ENCODE measurements at regions of chr5 and their contacts with region 1.

Region 1: DNA sequence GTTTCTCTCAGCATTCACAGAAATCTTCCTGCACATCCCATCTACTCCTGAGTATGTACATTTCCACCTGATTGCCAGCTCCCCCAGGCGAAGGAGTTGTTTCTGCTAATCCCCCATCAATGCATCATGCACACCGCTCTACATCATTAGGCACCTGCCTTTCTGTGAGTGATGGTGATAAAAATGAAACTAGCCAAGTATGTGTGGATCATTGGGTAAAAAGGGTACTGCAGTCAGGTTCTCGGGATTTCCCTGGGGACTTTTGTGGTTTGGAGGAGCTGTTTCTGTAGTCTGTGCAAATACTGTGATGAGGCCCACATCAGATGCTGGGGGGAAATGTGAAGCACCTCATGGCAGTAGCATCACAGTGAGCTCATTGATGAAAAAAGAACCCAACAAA is 30.4 kb downstream of the CAMK4 start:
- DNase-seq: peak; percentile 95
- H3K4me3 Mint-ChIP-seq: peak overlapping the region; percentile 46
- H3K27ac Mint-ChIP-seq: peak overlapping the region; percentile 90
- H3K4me1 Mint-ChIP-seq: peaks cover 78% of the 10 kb centered on the region
- H3K27me3 Mint-ChIP-seq: no peaks in the 10 kb centered on the region

Region 2: DNA sequence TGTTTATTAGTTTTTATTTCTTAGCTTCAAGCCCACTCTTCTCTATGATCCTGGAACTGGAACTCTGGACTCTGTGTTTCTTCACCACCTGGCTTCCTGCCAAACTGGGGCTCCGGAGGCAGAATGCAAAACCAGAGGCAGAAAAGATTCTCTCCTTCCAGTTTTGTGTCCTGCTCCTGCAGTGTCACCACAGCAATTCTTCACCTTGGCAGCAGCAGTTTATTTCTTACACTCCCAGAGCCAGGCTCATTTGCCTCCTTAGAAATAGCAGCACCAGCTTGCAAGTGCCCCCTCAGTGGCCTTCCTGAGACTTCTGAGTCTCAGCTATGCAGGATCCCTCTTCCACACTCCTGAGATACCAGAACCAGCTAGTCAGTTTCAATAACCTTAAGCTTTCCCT is 57.1 kb before region 1 on chr5:
- CTCF ChIA-PET with region 1: no interaction called
- intact Hi-C with region 1: no loop called
- DNase-seq: no peak
- H3K4me3 Mint-ChIP-seq: no peak overlapping the region
- H3K27ac Mint-ChIP-seq: no peak overlapping the region
- H3K4me1 Mint-ChIP-seq: peaks cover 12% of the 10 kb centered on the region
- H3K27me3 Mint-ChIP-seq: peaks cover 2% of the 10 kb centered on the region

Region 3: DNA sequence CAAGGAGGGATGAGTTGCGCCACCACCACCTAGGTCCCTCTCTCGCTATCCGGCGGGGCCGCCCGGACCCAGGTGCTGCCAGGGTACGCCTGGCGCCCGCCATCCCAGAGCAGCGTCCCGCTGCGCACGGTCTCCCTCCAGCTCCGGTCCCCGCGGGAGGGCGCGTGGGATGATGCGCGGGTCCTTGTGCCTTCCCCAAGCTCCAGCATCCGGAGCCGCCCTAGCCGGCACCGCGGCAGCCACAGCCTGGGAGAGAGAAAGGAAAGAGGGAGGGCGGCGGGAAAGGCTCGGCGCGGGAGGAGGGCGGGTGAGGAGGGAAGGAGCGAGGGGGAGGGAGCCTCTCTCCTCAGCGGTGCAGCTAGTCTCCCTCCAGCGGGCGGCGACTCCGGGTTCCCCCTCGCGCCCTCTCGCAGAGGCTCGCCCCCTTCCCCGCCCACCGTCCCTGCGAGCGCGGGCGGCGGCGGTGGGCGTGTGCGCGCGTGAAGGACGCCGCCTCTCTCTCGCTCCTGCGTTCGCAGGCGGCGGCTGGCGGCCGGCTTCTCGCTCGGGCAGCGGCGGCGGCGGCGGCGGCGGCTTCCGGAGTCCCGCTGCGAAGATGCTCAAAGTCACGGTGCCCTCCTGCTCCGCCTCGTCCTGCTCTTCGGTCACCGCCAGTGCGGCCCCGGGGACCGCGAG is 30.6 kb before region 1 on chr5 and contains the start of gene CAMK4:
- CTCF ChIA-PET with region 1: interaction called, 21 read pairs
- intact Hi-C with region 1: loop called (anchors 1 kb)
- DNase-seq: peak; percentile 75
- H3K4me3 Mint-ChIP-seq: peak within 1 kb of the TSS; percentile 95
- H3K27ac Mint-ChIP-seq: peak within 1 kb of the TSS; percentile 97
- H3K4me1 Mint-ChIP-seq: peaks cover 25% of the 10 kb centered on the region
- H3K27me3 Mint-ChIP-seq: no peaks in the 10 kb centered on the region
- total RNA-seq, gene CAMK4: 40.6 to 44.4 TPM

Region 4: GRCh38 chr5:111237470-111237869 is 17.1 kb before region 1 on chr5:
- CTCF ChIA-PET with region 1: interaction called, 55 read pairs
- intact Hi-C with region 1: loop called (anchors 1 kb)
- DNase-seq: no peak
- H3K4me3 Mint-ChIP-seq: peak overlapping the region; percentile 66
- H3K27ac Mint-ChIP-seq: peak overlapping the region; percentile 89
- H3K4me1 Mint-ChIP-seq: peaks cover 90% of the 10 kb centered on the region
- H3K27me3 Mint-ChIP-seq: no peaks in the 10 kb centered on the region

Region 5: GRCh38 chr5:111271885-111272284 is 17.3 kb after region 1 on chr5:
- CTCF ChIA-PET with region 1: interaction called, 3 read pairs
- intact Hi-C with region 1: loop called (anchors 1 kb)
- DNase-seq: no peak
- H3K4me3 Mint-ChIP-seq: no peak overlapping the region
- H3K27ac Mint-ChIP-seq: peak overlapping the region; percentile 19
- H3K4me1 Mint-ChIP-seq: peaks cover 70% of the 10 kb centered on the region
- H3K27me3 Mint-ChIP-seq: no peaks in the 10 kb centered on the region

Region 6: DNA sequence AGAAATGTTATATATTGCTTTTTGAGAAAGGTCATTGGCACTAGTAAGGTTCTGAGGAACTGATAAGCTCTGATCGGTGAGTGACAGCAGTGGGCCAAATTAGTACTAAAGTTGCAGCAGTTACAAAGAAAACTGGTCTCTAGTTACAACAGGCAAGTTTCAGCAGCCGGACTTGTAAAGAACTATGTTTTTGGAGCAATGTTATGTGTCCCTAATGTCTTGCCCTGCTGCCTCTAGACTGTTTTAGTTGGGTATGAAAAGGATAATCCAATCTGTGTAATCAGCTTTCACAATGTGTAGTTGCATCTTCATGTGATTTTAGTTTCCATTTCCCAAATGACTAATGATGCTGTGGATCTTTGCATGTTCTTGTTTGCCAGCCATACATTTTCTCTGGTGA is 83.1 kb after region 1 on chr5:
- CTCF ChIA-PET with region 1: no interaction called
- intact Hi-C with region 1: loop called (anchors 1 kb)
- DNase-seq: peak; percentile 10
- H3K4me3 Mint-ChIP-seq: peak overlapping the region; percentile 11
- H3K27ac Mint-ChIP-seq: peak overlapping the region; percentile 78
- H3K4me1 Mint-ChIP-seq: peaks cover 74% of the 10 kb centered on the region
- H3K27me3 Mint-ChIP-seq: no peaks in the 10 kb centered on the region

Region 7: GRCh38 chr5:112860929-112861637 is 1606.5 kb after region 1 on chr5 and contains the start of gene SRP19:
- CTCF ChIA-PET with region 1: no interaction called
- intact Hi-C with region 1: loop called (anchors 10 kb)
- DNase-seq: peak; percentile 96
- H3K4me3 Mint-ChIP-seq: peak within 1 kb of the TSS; percentile 96
- H3K27ac Mint-ChIP-seq: peak within 1 kb of the TSS; percentile 95
- H3K4me1 Mint-ChIP-seq: peaks cover 30% of the 10 kb centered on the region
- H3K27me3 Mint-ChIP-seq: peaks cover 9% of the 10 kb centered on the region
- total RNA-seq, gene SRP19: 43.7 to 49.6 TPM